Mammary epithelial cell (primary cell): ENCODE measurements at regions of chr10 and their contacts with region 1.

Region 1: GRCh38 chr10:17273403-17273802 is 45.4 kb downstream of the VIM start:
- DNase-seq: peak; percentile 88
- H3K4me3 ChIP-seq: no peak overlapping the region
- H3K27ac ChIP-seq: no peak overlapping the region
- H3K4me1 ChIP-seq: peaks cover 5% of the 10 kb centered on the region
- H3K27me3 ChIP-seq: no peaks in the 10 kb centered on the region
- CTCF ChIP-seq: no peak

Region 2: DNA sequence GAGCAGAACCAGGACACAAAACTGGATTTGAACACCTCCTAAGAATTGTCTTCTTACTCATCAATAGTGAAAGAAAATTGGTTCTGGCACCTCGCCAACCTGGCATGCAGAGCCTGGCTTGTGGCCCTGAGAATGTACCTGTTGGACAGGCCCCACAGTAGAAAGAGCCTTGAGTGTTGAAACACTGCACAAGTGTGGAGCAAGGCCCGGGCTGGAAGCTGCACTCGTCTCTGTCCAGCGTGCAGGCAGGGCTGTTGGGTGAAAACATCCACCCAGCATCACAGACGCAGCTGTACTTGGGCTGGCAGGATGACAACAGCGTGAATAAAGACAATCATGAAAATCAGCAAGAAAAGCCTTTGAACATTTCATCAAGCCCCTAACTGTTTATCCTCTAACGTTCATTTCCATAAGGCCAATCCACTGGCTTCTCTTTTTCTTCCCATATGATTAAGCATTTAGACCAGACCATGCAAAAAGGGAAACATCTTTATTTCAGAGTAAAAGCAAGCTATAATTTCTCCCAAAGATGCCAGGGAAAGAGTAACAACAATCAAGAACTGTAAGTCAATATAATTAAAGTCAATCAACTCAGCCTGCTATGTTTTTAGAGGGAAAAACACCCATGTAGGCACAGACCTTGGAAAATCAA is 159.4 kb before region 1 on chr10:
- CTCF ChIA-PET with region 1: interaction called, 10 read pairs
- dilution Hi-C with region 1: no loop called
- in situ Hi-C with region 1: no loop called
- intact Hi-C with region 1: no loop called
- DNase-seq: peak; percentile 42
- H3K4me3 ChIP-seq: no peak overlapping the region
- H3K27ac ChIP-seq: peak overlapping the region; percentile 35
- H3K4me1 ChIP-seq: peaks cover 26% of the 10 kb centered on the region
- H3K27me3 ChIP-seq: no peaks in the 10 kb centered on the region
- CTCF ChIP-seq: no peak

Region 3: DNA sequence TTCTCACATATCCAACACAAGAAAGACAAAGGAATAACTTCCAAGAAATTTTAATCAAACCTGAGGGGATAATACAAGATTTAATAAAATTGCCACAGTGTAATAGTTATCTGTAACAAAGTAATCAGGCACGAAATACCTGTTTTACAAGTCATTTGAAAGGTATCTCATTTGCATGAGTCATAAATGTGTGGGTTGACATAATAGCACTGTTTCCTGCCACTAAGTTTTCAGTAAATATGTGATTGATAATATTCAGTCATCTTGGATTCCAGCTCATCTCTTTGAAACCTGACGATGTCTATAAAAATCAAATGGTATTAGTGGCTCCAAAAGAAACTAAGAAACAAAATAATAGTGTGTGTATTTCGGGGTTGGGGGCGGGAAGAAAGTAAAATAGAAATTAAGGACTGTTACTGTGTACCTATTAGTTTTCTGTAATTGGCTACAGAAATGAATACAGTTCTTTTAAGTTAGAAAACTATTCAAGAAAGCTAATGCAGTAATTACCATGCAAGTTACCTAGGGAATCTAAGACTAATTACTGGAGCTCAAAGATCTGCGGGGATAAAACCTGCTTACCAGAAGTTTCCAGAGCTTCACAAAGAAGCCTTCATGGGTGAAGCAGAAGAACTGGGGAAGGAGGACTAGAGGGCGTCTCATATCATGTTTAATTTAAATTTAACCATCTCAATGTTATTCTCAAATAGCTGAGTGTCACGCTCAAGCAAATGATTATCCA is 80.3 kb after region 1 on chr10:
- CTCF ChIA-PET with region 1: no interaction called
- dilution Hi-C with region 1: no loop called
- in situ Hi-C with region 1: no loop called
- intact Hi-C with region 1: loop called (anchors 5 kb)
- DNase-seq: peak; percentile 79
- H3K4me3 ChIP-seq: no peak overlapping the region
- H3K27ac ChIP-seq: peak overlapping the region; percentile 15
- H3K4me1 ChIP-seq: peaks cover 34% of the 10 kb centered on the region
- H3K27me3 ChIP-seq: no peaks in the 10 kb centered on the region
- CTCF ChIP-seq: no peak